ENCODE measurements at regions of chrX and their contacts with region 1.

Region 1: DNA sequence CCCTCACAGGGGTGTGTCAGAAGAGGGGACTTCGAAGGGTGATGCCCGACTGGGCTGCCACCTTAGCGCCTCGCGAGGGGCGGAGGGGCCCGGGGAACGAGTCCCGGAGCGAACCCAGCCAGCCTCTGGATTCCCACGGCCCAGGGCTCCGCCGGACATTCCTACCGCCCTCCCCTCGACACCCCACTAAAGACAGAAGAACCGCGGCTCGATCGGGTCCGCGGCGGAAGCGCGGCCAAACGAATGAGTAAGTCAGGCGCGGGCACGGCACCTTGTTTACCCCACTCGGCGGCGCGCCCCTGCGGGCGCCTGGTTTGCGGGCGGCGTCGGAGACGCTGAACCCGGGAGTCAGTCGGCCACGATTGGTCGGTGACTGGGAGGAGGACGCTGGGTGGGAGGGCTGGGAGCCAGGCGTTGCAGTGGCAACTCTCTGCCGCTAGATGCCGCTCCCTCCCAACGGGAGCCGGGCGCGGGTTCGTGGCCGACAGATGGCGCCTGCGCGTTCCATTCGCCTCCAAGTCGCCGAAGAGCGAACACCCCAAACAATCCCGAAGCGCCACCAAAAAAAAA is 1.4 kb upstream of the STAG2 start:
- DNase-seq: peak; percentile 74 to 97 (median 84)

Region 2: DNA sequence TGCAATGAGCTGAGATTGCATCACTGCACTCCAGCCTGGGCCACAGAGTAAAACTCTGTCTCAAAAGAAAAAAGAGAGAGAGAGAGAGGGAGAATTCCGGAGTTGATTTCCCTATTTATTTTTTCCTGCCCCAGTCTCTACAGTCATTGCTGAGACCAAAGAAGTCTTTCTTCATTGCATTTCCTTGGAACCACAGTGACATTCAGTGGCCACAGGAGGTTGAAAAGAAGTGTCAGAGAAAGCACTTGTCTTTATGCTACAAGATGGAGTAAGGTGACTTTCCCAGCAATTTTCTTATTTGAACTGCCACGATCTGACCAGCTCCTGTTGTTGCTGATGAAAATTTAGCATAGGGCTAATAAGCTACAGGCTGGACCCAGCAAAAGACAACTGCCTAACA is 415.1 kb before region 1 on chrX:
- intact Hi-C with region 1: no loop called
- DNase-seq: no peak

Region 3: GRCh38 chrX:123859846-123860838 is 100.0 kb before region 1 on chrX and contains the start of gene XIAP:
- intact Hi-C with region 1: loop called (anchors 10 kb)
- DNase-seq: peak; percentile 47 to 95 (median 62)

Region 4: GRCh38 chrX:124018023-124018422 is 57.9 kb after region 1 on chrX:
- intact Hi-C with region 1: loop called (anchors 5 kb)
- DNase-seq: no peak

Region 5: DNA sequence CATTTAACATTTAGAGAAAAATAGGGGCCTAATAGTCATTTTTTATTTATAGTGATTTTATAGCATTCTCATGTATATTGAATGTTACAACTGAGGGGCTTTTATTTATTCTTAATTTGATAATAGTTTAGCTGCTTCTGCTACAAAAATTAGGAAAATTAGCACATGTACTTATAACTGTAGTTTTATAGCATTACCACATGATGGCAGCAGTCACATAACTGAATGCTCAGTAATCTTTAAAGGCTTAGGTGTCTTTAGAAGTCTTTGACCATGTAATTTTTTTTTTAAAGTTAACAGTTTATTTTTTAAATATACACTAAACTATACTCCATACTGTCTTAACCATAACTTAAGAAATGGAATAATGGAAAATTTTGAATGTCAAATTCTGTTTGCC is 138.0 kb after region 1 on chrX:
- intact Hi-C with region 1: loop called (anchors 10 kb)
- DNase-seq: no peak